ENCODE measurements at regions of chr3 and their contacts with region 1.

Region 1: DNA sequence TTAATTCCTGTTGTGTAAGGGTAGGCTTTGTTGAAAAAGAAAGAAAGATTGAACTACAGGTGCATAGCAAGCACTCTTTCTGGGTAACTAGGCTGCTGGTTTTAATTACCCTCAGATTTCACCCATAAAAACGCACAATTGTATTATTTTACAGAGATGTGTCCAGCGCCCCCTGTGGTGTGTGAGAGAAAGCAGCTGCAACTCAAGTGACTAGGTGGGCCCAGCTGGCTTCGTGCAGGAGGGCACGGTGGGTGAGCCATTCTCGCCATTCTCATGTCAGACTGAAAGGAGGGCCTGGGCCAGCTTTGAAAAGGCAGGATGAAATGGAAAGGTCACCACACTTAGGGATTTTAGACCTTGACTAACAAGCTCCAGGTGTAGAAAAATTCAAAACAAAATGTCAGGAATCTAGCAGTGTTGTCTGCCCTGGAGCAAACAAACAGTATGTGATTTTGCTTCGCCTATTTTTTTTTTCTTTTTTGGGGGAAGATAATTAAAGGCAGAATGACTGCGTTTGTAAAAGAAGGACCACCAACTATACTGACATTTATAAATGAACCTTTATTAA is 122.5 kb downstream of the LRIG1 start:
- DNase-seq: peak; percentile 60
- ATAC-seq: peak; percentile 68
- H3K4me3 Mint-ChIP-seq: no peak overlapping the region
- H3K27ac Mint-ChIP-seq: peak overlapping the region; percentile 82
- H3K4me1 Mint-ChIP-seq: peaks cover 13% of the 10 kb centered on the region
- H3K27me3 Mint-ChIP-seq: no peaks in the 10 kb centered on the region
- CTCF ChIP-seq: peak; percentile 46

Region 2: DNA sequence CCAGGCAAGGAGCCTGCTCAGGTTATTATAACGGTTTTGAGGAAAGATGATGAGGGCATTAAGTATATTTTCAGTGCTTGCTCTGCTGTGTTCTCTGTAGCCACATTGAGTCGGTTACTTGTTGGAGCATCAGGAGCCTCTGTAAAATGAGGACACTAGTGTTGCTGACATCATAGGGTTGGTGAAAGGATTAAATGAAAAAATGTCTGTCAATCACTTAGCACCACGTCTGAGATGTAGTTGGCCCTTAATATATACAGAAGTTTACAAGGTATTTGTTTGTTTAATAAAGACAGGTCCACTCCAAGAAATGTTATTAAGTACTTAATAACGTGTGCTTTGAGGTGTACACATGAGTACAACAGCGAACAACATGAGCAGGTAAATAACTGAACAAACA is 158.3 kb before region 1 on chr3:
- CTCF ChIA-PET with region 1: no interaction called
- POLR2A ChIA-PET with region 1: no interaction called
- intact Hi-C with region 1: no loop called
- DNase-seq: no peak
- ATAC-seq: no peak
- H3K4me3 Mint-ChIP-seq: peak overlapping the region; percentile 97
- H3K27ac Mint-ChIP-seq: peak overlapping the region; percentile 66
- H3K4me1 Mint-ChIP-seq: peaks cover 32% of the 10 kb centered on the region
- H3K27me3 Mint-ChIP-seq: no peaks in the 10 kb centered on the region
- CTCF ChIP-seq: no peak

Region 3: GRCh38 chr3:66312039-66312438 is 66.3 kb before region 1 on chr3:
- CTCF ChIA-PET with region 1: no interaction called
- POLR2A ChIA-PET with region 1: no interaction called
- intact Hi-C with region 1: no loop called
- DNase-seq: peak; percentile 34
- ATAC-seq: no peak
- H3K4me3 Mint-ChIP-seq: no peak overlapping the region
- H3K27ac Mint-ChIP-seq: no peak overlapping the region
- H3K4me1 Mint-ChIP-seq: peaks cover 27% of the 10 kb centered on the region
- H3K27me3 Mint-ChIP-seq: no peaks in the 10 kb centered on the region
- CTCF ChIP-seq: no peak

Region 4: DNA sequence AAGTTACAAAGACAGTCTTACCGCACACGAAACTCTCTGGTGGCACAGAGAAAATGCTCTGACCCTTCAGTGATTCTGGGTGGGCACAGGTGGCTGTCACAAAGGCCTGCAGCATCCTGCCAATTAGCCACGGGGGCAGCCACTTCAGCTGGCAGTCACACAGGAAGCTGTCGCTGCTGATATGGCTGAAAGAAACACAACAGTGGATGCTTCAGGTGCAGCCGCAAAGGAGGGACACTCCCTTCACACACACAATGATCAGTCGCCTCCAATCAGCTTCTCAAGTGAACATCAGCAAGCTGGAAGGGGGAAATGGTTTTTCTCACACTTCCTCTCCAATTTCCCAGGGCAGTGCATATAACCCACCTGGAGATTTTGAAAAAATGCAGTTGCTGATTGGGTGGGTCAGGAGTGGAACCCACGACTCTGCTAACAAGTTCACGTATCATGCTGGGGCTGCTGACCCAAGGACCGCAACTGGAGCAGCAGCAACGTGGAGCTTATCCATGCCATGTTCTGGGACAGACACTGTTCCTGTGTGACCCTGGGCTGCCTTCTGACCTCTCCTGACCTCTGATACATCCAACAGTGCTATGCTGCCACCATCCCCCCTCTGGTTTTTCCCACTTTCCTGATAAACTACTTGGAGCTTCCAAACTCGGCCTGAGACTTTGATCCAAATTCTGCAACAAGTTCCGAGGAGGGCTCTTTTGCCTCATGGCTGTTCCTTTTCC is 15.8 kb after region 1 on chr3:
- CTCF ChIA-PET with region 1: interaction called, 35 read pairs
- POLR2A ChIA-PET with region 1: interaction called, 4 read pairs
- intact Hi-C with region 1: no loop called
- DNase-seq: peak; percentile 76
- ATAC-seq: peak; percentile 98
- H3K4me3 Mint-ChIP-seq: peak overlapping the region; percentile 59
- H3K27ac Mint-ChIP-seq: peak overlapping the region; percentile 83
- H3K4me1 Mint-ChIP-seq: peaks cover 45% of the 10 kb centered on the region
- H3K27me3 Mint-ChIP-seq: no peaks in the 10 kb centered on the region
- CTCF ChIP-seq: no peak

Region 5: GRCh38 chr3:66500576-66501482 is 122.5 kb after region 1 on chr3 and contains the start of gene LRIG1:
- CTCF ChIA-PET with region 1: no interaction called
- POLR2A ChIA-PET with region 1: no interaction called
- intact Hi-C with region 1: no loop called
- DNase-seq: peak; percentile 99
- ATAC-seq: peak; percentile 97
- H3K4me3 Mint-ChIP-seq: peak within 1 kb of the TSS; percentile 92
- H3K27ac Mint-ChIP-seq: peak within 1 kb of the TSS; percentile 88
- H3K4me1 Mint-ChIP-seq: peaks cover 43% of the 10 kb centered on the region
- H3K27me3 Mint-ChIP-seq: peaks cover 20% of the 10 kb centered on the region
- CTCF ChIP-seq: no peak
- total RNA-seq, gene LRIG1: 12.7 to 13.0 TPM